B cell (primary cell): ENCODE measurements at regions of chr3 and their contacts with region 1.

Region 1: DNA sequence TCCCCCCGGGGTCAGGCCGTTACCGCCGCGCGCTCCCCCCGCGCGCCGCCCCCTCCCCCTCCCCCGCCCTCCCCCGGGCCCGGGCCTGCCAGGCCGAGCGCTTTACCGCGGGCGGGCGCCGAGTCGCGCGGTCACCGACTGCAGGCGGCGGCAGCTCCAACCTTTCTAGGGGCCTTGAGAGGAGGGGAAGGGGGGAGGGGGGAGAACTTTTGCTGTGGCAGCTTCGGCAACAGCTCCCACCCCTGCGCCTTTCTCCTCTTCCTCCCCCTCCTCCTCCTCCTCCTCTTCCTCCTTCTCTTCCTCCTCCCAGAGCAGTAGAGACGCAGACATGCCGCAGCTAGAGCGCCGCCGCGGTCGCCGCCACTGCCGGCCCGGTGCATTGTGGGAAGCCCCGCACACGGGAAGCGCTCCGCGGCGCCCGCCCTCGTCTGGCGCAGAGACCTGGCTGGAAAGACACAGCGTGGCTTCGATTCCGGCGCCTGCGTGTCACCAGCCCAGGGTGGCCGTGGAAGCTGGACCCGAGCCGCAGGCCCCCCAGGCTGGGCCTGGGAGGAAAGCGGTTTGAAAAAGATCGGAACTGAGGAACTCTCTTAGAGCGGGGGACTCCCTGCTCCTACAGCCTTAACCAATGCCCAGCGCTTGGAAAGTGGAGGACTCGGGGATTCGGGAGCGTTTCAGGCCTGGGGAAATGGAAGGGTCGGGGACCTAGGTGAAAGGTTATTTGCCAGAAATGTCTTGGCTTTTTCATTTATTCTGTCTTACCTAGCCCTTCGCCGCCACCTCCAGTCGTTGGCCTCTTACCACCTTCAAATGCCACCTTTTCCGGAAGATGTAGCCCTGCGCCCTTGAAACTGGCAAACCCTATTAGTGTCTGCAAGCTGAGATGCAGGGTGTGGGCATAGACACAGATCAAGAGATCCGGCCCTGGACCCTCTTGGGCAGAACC is at the start of gene ZNF148:
- DNase-seq: peak; percentile 94
- ATAC-seq: peak; percentile 94
- H3K4me3 ChIP-seq: peak within 1 kb of the TSS; percentile 72 to 99 (median 96)
- H3K4me3 Mint-ChIP-seq: peak within 1 kb of the TSS; percentile 97
- H3K27ac ChIP-seq: peak within 1 kb of the TSS; percentile 83 to 97
- H3K27ac Mint-ChIP-seq: peak within 1 kb of the TSS; percentile 96
- H3K4me1 ChIP-seq: peaks cover 19 to 23% of the 10 kb centered on the region in 2 donors
- H3K4me1 Mint-ChIP-seq: peaks cover 40% of the 10 kb centered on the region
- H3K27me3 ChIP-seq: no peaks in the 10 kb centered on the region
- H3K27me3 Mint-ChIP-seq: no peaks in the 10 kb centered on the region
- CTCF ChIP-seq: no peak
- total RNA-seq, gene ZNF148: 71.5 and 74.6 TPM in 2 replicates

Region 2: GRCh38 chr3:123584988-123585937 is 1790.0 kb before region 1 on chr3 and contains the start of gene HACD2:
- CTCF ChIA-PET with region 1: no interaction called
- POLR2A ChIA-PET with region 1: no interaction called
- intact Hi-C with region 1: loop called (anchors 2 kb)
- DNase-seq: peak; percentile 96
- ATAC-seq: peak; percentile 94
- H3K4me3 ChIP-seq: peak within 1 kb of the TSS; percentile 78 to 99 (median 86)
- H3K4me3 Mint-ChIP-seq: no peak within 1 kb of the TSS
- H3K27ac ChIP-seq: peak within 1 kb of the TSS; percentile 79 to 87
- H3K27ac Mint-ChIP-seq: peak within 1 kb of the TSS; percentile 85
- H3K4me1 ChIP-seq: peaks cover 23 to 25% of the 10 kb centered on the region in 2 donors
- H3K4me1 Mint-ChIP-seq: peaks cover 25% of the 10 kb centered on the region
- H3K27me3 ChIP-seq: no peaks in the 10 kb centered on the region
- H3K27me3 Mint-ChIP-seq: no peaks in the 10 kb centered on the region
- CTCF ChIP-seq: no peak
- total RNA-seq, gene HACD2: 30.7 and 31.1 TPM in 2 replicates

Region 3: GRCh38 chr3:125055913-125056745 is 319.1 kb before region 1 on chr3 and contains the start of gene HEG1:
- CTCF ChIA-PET with region 1: no interaction called
- POLR2A ChIA-PET with region 1: interaction called, 9 read pairs
- intact Hi-C with region 1: loop called (anchors 2 kb)
- DNase-seq: peak; percentile 80
- ATAC-seq: peak; percentile 79
- H3K4me3 ChIP-seq: peak within 1 kb of the TSS; percentile 47 to 83 (median 69)
- H3K4me3 Mint-ChIP-seq: peak within 1 kb of the TSS; percentile 96
- H3K27ac ChIP-seq: peak within 1 kb of the TSS; percentile 44 to 62
- H3K27ac Mint-ChIP-seq: peak within 1 kb of the TSS; percentile 83
- H3K4me1 ChIP-seq: peaks cover 31 to 45% of the 10 kb centered on the region in 2 donors
- H3K4me1 Mint-ChIP-seq: peaks cover 40% of the 10 kb centered on the region
- H3K27me3 ChIP-seq: peaks cover 0 to 6% (median 2%) of the 10 kb centered on the region in 4 experiments
- H3K27me3 Mint-ChIP-seq: peaks cover 13% of the 10 kb centered on the region
- CTCF ChIP-seq: no peak
- total RNA-seq, gene HEG1: 8.9 and 9.2 TPM in 2 replicates

Region 4: DNA sequence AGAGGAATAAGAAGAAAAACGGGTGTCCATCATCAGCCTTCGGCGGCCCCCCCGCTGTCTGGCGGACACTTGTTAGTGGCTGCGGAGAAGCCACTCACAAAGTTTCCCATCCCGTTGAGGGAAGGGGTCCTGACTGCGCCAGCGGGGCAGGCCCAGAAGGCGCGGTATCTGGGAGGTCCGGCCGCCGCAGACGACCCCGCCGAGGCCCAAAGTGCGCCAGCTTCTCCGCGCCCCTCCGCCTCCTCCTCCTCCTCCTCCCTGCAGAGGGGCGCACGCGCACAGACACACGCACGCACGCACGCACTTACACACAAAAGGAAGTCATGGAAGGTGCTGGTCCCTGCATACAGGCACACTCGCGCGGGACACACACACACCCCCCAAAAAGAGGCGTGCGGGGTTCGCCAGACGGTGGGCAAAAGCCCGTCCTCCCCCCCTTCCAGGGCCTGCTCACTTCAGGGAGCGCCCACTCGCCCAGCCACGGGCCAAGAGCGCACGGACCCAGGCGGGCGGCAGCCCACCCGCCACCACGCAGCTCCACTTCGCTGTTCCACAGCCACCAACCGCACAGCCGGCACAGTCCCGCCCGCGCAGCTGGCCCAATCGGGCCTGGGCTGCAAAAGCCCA is 18.1 kb before region 1 on chr3:
- CTCF ChIA-PET with region 1: interaction called, 4 read pairs
- POLR2A ChIA-PET with region 1: interaction called, 4 read pairs
- intact Hi-C with region 1: loop called (anchors 2 kb)
- DNase-seq: peak; percentile 77
- ATAC-seq: peak; percentile 92
- H3K4me3 ChIP-seq: peak overlapping the region; percentile 44 to 74 (median 65)
- H3K4me3 Mint-ChIP-seq: peak overlapping the region; percentile 89
- H3K27ac ChIP-seq: peak overlapping the region in 1 of 2 donors; percentile 79
- H3K27ac Mint-ChIP-seq: peak overlapping the region; percentile 84
- H3K4me1 ChIP-seq: peaks cover 26 to 41% of the 10 kb centered on the region in 2 donors
- H3K4me1 Mint-ChIP-seq: peaks cover 66% of the 10 kb centered on the region
- H3K27me3 ChIP-seq: no peaks in the 10 kb centered on the region
- H3K27me3 Mint-ChIP-seq: no peaks in the 10 kb centered on the region
- CTCF ChIP-seq: no peak

Region 5: DNA sequence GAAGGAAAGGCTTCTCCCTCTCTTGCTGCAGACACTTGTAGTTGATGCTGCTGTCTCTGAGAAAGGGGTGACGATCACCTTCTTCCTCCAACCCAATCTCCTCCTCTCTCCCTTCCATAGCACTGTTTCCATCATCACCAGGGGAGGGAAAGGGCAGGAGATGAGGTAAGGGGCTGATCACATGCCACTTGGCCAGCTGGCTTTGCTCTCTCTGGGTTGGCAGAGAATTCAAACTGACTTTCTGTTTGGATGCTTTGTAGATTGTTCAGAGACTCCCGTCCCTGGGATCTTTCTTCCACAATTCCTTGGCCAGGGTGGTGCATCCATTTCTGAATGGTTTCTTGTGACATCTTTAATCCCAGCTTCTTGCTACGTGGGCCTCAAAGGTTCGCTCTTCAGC is 43.0 kb after region 1 on chr3:
- CTCF ChIA-PET with region 1: no interaction called
- POLR2A ChIA-PET with region 1: no interaction called
- intact Hi-C with region 1: no loop called
- DNase-seq: no peak
- ATAC-seq: no peak
- H3K4me3 ChIP-seq: no peak overlapping the region
- H3K4me3 Mint-ChIP-seq: no peak overlapping the region
- H3K27ac ChIP-seq: no peak overlapping the region
- H3K27ac Mint-ChIP-seq: no peak overlapping the region
- H3K4me1 ChIP-seq: no peaks in the 10 kb centered on the region
- H3K4me1 Mint-ChIP-seq: no peaks in the 10 kb centered on the region
- H3K27me3 ChIP-seq: no peaks in the 10 kb centered on the region
- H3K27me3 Mint-ChIP-seq: peaks cover 7% of the 10 kb centered on the region
- CTCF ChIP-seq: no peak

Region 6: GRCh38 chr3:125916376-125916978 is 541.2 kb after region 1 on chr3:
- CTCF ChIA-PET with region 1: no interaction called
- POLR2A ChIA-PET with region 1: no interaction called
- intact Hi-C with region 1: loop called (anchors 10 kb)
- DNase-seq: peak; percentile 94
- ATAC-seq: peak; percentile 90
- H3K4me3 ChIP-seq: peak overlapping the region; percentile 21 to 77 (median 74)
- H3K4me3 Mint-ChIP-seq: peak overlapping the region; percentile 93
- H3K27ac ChIP-seq: peak overlapping the region; percentile 78 to 85
- H3K27ac Mint-ChIP-seq: peak overlapping the region; percentile 96
- H3K4me1 ChIP-seq: peaks cover 0 to 15% of the 10 kb centered on the region in 2 donors
- H3K4me1 Mint-ChIP-seq: peaks cover 11% of the 10 kb centered on the region
- H3K27me3 ChIP-seq: no peaks in the 10 kb centered on the region
- H3K27me3 Mint-ChIP-seq: no peaks in the 10 kb centered on the region
- CTCF ChIP-seq: no peak